Left cardiac atrium (tissue), 4 donors: ENCODE measurements at regions of chr10 and their contacts with region 1.

Region 1: DNA sequence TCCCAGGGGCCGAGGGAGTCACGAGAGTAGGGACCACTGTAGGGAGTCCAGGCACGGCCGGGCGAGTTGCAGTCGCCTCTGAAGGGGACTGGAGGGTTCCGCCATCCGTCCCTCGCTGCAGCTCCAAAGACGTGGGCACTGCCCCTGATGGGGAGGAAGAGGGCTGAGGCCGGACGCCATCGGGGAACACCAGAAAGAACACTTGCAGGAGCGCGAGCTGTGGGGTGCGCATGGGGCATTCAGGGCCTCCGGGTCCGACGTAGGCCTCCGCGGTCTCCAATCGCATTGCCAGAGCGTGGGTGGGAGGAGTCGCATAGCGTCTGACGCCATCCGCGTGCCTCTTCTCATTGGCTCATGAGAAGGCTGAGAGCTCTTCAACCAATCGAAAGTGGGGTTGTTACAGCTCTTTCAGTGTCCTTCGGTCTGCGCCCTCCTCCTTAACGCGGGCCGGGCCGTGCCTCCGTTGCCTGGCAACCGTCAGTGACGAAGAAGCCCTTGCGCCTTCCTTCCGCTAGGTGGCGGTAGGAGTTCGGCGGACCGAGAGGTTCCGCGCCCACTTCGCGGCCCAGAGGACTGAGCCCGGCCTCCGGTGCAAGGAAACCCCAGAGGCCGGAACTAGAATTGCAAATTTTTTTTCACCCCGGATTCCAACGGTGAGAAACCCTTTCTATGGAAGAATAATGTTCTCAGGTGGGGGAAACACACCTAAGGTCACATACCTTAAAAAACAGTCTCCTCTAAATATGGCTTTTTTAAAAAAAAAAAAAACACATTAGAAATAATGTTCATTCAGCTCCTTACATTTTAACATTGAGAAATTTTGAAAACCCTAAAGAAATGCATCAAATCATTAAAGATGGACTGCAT is at the start of gene TCTN3:
- DNase-seq: peak; percentile 98
- ATAC-seq: peak; percentile 100
- total RNA-seq, gene TCTN3: 13.4 to 20.2 TPM

Region 2: GRCh38 chr10:95814011-95814727 is 120.3 kb after region 1 on chr10:
- intact Hi-C with region 1: no loop called
- DNase-seq: peak; percentile 51
- ATAC-seq: peak; percentile 38 to 76

Region 3: DNA sequence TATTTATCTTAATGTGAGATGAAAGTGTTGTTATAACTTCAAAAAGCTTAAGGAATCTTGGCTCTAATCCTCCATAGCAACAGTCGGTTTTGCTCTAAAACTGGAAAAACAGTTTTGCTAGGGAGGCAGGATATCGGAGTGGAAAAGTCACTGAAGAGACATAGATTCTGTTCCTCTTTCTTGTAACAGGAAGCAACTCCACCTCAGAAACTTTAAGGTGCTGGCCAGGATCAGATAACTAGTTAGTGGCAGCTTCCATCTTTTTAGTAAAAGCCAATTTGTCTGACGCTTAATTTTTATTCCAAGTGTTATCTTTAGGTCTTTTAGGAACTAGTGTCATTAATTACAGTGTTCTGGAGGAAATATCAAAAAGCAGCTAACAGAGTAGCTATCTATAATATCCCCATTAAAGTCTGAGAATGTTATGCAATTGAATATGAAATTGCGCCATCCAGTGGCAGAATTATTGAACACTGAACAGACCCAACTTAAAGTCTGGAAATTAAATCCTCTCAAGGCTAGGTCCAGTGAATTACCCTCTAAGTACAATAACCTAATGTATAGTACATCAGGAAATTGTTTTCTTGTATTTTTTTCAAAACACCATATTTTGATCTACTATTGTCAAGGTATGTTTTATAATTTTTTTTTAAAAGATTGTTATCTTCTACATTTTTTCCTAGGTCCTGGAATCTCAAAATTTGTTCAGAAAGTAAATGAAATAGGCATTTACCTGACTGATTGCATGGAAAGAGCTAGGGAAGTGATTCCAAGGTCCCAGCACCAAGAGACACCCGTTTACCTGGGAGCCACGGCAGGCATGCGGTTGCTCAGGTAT is 148.0 kb after region 1 on chr10:
- intact Hi-C with region 1: loop called (anchors 2 to 10 kb)
- DNase-seq: no peak
- ATAC-seq: peak; percentile 76 to 77

Region 4: DNA sequence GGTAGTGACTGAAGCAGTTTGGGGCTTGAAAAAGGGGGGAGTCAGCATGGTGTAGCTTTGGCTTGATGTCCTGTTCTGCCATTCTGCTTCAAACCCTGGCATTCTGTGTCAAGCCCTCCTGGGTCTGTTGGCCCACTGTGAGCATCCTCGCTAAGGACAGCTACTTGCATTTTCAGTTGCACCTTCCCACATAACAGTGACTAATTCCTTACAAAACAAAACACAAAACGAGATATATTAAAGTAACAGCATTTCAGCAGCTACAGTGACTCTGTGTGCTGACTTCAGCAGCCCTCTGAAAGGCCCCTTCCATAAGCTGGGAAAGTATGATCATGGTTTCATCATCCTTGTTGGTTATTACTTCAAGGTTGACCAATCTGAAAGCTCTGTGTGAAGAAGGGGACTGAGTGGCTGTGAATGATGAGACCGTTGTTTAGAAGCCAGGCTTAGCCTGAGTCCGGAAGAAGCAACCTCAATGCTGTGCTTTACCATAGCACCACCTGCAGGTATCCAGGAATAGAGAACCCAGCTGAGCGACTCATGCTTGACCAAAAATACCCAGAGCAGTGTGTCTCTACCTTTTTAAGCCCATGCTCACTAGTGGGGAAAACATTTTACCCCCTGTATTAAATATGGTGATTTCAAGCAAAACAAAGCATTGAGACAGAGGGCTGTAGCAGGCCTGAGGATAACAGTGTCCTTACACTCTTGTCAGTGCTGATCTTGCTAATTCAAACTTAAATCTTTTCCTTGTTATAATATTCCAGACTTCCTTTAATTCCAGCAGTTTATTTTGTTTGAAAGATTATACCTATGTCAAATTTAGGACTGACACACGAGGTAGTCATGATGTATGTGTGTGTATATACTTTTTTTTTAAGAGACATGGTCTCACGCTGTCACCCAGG is 171.3 kb after region 1 on chr10:
- intact Hi-C with region 1: loop called in 1 of 2 experiments (anchors 1 kb)
- DNase-seq: peak; percentile 28
- ATAC-seq: peak; percentile 88 to 94